ENCODE measurements at regions of chr5 and their contacts with region 1.

Region 1: DNA sequence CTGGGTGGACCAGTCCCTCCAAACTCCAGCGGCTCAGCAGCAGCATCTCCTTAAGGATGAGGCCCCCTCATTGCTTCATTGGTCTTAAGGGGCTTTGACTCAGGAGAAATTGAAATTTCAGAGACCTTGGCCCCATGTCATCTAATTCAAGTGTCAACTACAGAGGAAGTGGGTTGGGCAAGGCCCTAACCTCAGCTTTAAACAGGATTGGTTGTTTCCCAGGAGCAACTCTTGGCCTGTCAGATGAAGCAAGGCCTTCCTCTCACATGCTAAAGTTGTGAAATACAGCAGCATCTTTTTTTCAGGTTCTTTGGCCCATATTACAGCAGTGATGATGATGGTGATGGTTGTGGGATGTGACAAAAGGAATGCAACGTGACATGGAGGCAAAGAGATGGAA is 348.3 kb downstream of the ICE1 start:
- DNase-seq: no peak
- H3K4me3 ChIP-seq: no peak overlapping the region
- H3K27ac ChIP-seq: no peak overlapping the region
- H3K4me1 ChIP-seq: no peaks in the 10 kb centered on the region
- H3K27me3 ChIP-seq: no peaks in the 10 kb centered on the region
- CTCF ChIP-seq: no peak
- POLR2A ChIP-seq: no peak

Region 2: DNA sequence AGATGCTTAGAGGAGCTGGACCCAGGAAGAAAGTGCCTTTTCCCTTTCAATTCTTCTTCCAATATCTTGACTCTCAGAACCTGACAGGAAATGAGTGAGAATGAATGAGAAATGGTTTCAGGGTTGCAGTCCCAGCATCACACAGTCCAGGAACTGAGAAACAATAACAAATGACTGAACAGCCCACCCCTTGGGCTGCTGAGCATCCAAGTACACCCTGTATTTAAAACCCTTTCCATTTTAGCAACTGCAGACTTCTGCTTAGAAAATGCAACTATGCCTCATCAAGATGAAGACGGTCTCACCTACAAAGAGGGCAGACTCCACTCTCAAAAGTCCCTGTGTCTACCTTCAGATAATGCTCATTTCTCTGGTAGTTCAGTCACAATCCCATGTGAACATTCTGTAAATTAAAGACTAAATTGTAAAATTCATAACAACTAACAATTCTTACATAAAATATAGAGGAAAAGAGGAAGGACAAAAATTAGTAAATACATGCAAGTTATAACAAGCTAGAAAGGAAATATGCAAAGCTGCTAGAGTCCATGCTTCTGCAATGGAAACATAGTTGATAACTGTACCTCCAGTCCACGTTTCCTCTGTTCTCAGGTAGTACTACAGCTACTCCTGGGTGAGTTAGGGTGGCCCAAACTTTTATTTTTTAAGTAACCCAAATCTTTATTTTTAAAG is 31.9 kb before region 1 on chr5:
- intact Hi-C with region 1: no loop called
- DNase-seq: no peak
- H3K4me3 ChIP-seq: no peak overlapping the region
- H3K27ac ChIP-seq: no peak overlapping the region
- H3K4me1 ChIP-seq: no peaks in the 10 kb centered on the region
- H3K27me3 ChIP-seq: no peaks in the 10 kb centered on the region
- CTCF ChIP-seq: no peak
- POLR2A ChIP-seq: no peak

Region 3: GRCh38 chr5:5751498-5751897 is 19.3 kb before region 1 on chr5:
- intact Hi-C with region 1: loop called (anchors 1 kb)
- DNase-seq: no peak
- H3K4me3 ChIP-seq: no peak overlapping the region
- H3K27ac ChIP-seq: no peak overlapping the region
- H3K4me1 ChIP-seq: no peaks in the 10 kb centered on the region
- H3K27me3 ChIP-seq: no peaks in the 10 kb centered on the region
- CTCF ChIP-seq: no peak
- POLR2A ChIP-seq: no peak

Region 4: GRCh38 chr5:5787373-5787772 is 16.5 kb after region 1 on chr5:
- intact Hi-C with region 1: no loop called
- DNase-seq: no peak
- H3K4me3 ChIP-seq: no peak overlapping the region
- H3K27ac ChIP-seq: no peak overlapping the region
- H3K4me1 ChIP-seq: no peaks in the 10 kb centered on the region
- H3K27me3 ChIP-seq: no peaks in the 10 kb centered on the region
- CTCF ChIP-seq: no peak
- POLR2A ChIP-seq: no peak